GM10248 (cell line): ENCODE measurements at regions of chr12 and their contacts with region 1.

Region 1: DNA sequence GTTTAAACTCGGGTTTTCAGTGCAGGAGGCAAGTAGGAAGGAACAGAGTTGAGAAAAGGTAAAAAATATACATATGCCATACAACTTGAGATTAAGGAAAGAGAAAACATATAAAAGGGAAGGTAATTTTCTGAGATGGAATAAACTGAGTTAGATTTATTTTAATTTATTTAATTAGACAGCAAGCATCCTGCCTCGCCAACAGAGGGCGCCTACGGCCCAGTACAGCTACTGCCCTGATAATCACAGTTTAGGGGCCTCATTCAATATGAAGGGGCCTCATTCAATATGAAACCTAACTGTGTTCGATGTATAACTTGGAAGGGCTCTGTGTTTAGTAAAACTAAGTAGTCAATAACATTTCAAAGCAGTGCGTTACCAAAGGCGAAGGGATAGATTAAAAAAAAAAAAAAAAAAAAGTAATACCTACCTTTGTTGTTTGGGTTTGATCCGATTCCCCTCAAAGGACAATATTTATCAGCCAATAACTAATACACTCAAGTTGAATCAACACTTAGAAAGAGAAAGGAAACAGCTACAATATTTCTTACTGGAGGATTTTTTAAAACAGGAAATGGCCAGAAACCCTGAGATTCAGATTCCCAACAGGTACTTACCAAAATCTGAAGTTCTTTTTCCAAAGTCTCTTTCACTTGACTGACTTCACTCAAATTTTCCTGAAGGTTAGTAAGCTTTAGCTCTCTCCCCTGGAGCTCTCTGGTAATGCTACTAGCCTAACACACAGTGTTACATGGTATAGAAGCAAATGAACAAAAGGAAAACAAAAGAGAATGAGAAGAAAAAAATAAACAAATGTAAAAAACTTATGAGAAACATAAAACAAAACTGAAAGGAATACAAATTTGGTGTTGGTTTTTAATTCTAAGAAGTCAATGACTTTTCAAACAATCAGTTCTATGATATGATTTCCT is 70.0 kb upstream of the VPS33A start:
- DNase-seq: peak; percentile 43
- CTCF ChIP-seq: peak; percentile 65

Region 2: DNA sequence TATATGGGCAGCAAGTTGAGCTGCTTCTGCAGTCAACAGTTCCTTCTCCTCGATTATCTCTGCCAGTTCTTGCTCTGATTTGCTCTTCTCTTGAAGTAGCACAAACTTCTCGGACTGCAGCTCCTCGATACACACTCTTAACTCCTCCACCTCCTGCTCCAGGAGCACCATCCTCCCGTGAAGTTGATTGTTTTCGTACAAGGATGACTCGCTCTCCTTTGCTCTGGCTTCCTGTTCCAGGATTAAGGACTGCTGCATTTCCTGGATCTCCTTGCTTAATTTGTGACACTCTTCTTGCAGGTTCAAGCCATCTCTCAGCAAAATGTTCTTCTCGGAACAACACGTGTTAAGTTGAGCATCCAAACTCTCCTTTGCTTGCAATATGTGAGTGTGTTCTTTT is 13.8 kb before region 1 on chr12:
- CTCF ChIA-PET with region 1: interaction called, 12 read pairs
- POLR2A ChIA-PET with region 1: no interaction called
- DNase-seq: no peak
- CTCF ChIP-seq: no peak

Region 3: GRCh38 chr12:122349078-122349477 is 12.8 kb after region 1 on chr12:
- CTCF ChIA-PET with region 1: interaction called, 60 read pairs
- POLR2A ChIA-PET with region 1: no interaction called
- DNase-seq: no peak
- CTCF ChIP-seq: no peak